A549 (cell line): ENCODE measurements at regions of chr5 and their contacts with region 1.

Region 1: DNA sequence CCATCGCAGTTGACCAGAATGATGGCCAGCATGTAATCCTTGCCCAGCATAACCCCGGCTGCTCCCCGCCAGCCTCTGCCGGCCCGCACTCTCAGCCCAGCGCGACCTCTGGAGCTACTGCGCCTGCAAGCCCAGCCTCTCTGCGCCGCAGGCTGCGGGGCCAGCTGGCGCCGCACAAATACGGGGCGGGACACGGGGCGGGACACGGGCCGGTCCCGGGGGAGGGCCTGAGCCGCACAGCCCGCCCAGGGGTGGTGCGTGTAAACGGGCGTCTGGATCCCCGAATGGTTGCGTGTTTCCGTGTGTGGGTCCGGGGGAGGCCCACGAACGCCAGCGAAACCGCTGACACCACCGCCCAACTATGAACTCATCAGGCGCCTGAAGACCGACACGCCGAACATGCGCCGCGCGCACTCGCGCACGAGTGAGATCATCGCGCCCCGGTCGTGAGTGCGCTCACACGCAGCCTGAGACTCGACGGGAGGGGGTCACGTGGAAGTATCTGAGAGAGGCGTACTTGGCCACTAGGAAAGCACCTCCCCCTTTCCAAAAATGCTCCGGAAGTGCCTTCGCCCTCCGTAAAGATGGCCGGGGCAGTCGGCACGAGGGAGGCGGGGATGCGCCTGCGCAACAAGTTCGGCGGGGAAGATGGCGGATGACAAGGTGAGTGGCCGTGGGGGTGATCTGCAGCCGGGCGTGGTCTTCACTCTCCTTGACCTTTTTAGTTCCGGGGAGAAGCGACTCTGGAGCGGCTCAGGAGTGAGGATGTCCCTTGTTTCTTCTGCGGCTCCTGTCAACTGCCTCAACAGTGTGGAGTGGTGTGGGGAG is at the starts of genes APBB3 and SLC35A4:
- DNase-seq: peak; percentile 96 to 98
- ATAC-seq: peak; percentile 87 to 94
- H3K4me3 ChIP-seq: peak within 1 kb of the TSS; percentile 84
- H3K27ac ChIP-seq: peak within 1 kb of the TSS; percentile 88
- H3K4me1 ChIP-seq: peaks cover 18% of the 10 kb centered on the region
- CTCF ChIP-seq: no peak
- EP300 ChIP-seq: no peak
- POLR2A ChIP-seq: peak; percentile 75
- RAD21 ChIP-seq: peak in 1 of 2 experiments; percentile 10; a peak in 2 of 5 replicates
- polyA plus RNA-seq, gene APBB3: 11.7 and 13.4 TPM in 2 replicates
- polyA plus RNA-seq, gene SLC35A4: 79.5 and 135 TPM in 2 replicates

Region 2: GRCh38 chr5:140576776-140577201 is 12.4 kb after region 1 on chr5:
- CTCF ChIA-PET with region 1: interaction called, 11 read pairs
- POLR2A ChIA-PET with region 1: interaction called, 3 read pairs
- DNase-seq: no peak
- ATAC-seq: peak in 1 of 2 experiments; percentile 22; a peak in 1 of 6 replicates
- H3K4me3 ChIP-seq: no peak overlapping the region
- H3K27ac ChIP-seq: peak overlapping the region in 1 of 2 experiments; percentile 8; a peak in 1 of 6 replicates
- H3K4me1 ChIP-seq: no peaks in the 10 kb centered on the region
- CTCF ChIP-seq: no peak
- EP300 ChIP-seq: no peak
- POLR2A ChIP-seq: no peak
- RAD21 ChIP-seq: no peak